ENCODE measurements at regions of chr10 and their contacts with region 1.

Region 1: DNA sequence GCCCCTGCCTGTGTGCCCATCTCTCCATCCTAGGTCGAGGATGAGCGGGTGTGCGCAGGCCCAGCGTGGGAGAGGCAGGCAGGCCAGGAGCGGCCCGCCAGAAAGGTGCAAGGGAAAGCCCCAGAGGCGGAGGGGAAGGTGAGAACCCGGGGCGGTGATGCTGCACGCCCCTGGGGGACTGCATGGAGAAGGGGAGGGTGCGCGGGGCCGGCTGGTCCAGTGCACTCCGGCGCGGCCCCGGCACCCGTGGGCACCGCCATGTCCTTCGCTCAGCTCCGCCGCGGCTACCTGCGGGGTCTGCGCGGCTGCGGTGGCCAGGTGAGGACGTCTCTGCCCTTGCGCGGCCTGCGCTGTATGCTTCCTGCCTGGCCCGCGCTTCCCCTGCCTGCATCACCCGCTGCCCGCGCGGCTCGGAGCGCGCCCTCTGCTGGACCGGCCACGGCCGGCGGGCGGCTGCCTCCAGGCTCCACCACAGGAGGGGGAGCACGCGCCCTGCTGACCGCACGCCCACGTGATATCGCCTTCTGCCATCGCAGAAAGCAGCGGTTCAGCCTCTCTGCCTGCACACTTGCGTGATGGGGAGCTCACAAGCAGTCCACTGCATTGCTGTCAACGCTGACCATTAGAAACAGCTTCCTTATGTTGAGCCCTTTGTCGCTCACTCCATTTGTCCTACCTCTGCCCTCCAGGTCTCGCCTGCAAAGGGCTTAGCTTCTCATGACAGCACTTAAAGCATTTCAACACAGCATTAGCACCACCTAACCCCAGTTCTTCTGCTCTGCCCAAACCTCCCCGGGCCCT is 73.9 kb downstream of the CXCL12 start:
- DNase-seq: peak; percentile 93
- H3K4me3 ChIP-seq: no peak overlapping the region; a peak in 2 of 4 replicates
- H3K27ac ChIP-seq: no peak overlapping the region
- H3K4me1 ChIP-seq: peaks cover 0 to 30% of the 10 kb centered on the region in 2 experiments; a peak in 1 of 4 replicates
- H3K27me3 ChIP-seq: no peaks in the 10 kb centered on the region
- CTCF ChIP-seq: peak; percentile 62
- EP300 ChIP-seq: no peak
- RAD21 ChIP-seq: peak; percentile 74

Region 2: GRCh38 chr10:44046605-44047004 is 264.4 kb before region 1 on chr10:
- CTCF ChIA-PET with region 1: interaction called, 10 read pairs
- POLR2A ChIA-PET with region 1: no interaction called
- DNase-seq: no peak
- H3K4me3 ChIP-seq: no peak overlapping the region
- H3K27ac ChIP-seq: no peak overlapping the region
- H3K4me1 ChIP-seq: peaks cover 0 to 31% of the 10 kb centered on the region in 2 experiments; a peak in 2 of 4 replicates
- H3K27me3 ChIP-seq: no peaks in the 10 kb centered on the region
- CTCF ChIP-seq: no peak
- EP300 ChIP-seq: no peak
- RAD21 ChIP-seq: no peak

Region 3: DNA sequence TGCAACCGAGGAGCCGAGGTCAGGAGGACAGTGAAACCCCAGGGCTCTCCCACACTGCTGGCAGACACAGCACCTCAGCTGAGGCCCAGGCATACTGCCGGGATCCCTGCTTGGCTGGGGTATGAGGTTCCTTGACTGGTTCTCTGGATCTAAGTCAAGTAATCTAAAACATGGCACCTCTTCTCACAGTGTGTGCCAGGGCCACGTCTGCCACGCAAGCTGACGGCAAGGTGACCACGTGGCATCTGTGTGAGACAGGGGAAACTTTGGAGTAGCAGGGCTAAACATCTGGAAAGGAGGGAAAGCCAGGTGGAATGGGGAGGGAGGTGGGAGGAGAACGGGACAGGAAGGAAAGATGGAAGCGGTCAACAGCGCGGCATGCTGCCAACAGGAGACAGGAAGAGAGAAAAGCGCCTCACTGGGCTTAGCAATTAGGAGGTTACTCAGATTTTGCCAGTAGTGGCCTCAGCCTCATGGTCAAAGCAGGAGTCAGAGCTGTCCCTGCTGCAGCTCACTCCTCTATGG is 29.8 kb before region 1 on chr10:
- CTCF ChIA-PET with region 1: interaction called, 16 read pairs
- POLR2A ChIA-PET with region 1: no interaction called
- DNase-seq: no peak
- H3K4me3 ChIP-seq: no peak overlapping the region
- H3K27ac ChIP-seq: peak overlapping the region in 1 of 2 experiments; percentile 20; a peak in 1 of 4 replicates
- H3K4me1 ChIP-seq: peaks cover 0 to 39% of the 10 kb centered on the region in 2 experiments; a peak in 2 of 4 replicates
- H3K27me3 ChIP-seq: no peaks in the 10 kb centered on the region
- CTCF ChIP-seq: no peak
- EP300 ChIP-seq: no peak
- RAD21 ChIP-seq: no peak

Region 4: GRCh38 chr10:44293842-44294241 is 17.1 kb before region 1 on chr10:
- CTCF ChIA-PET with region 1: interaction called, 13 read pairs
- POLR2A ChIA-PET with region 1: no interaction called
- DNase-seq: no peak
- H3K4me3 ChIP-seq: no peak overlapping the region
- H3K27ac ChIP-seq: no peak overlapping the region
- H3K4me1 ChIP-seq: peaks cover 0 to 2% of the 10 kb centered on the region in 2 experiments; a peak in 1 of 4 replicates
- H3K27me3 ChIP-seq: no peaks in the 10 kb centered on the region
- CTCF ChIP-seq: no peak
- EP300 ChIP-seq: no peak
- RAD21 ChIP-seq: no peak

Region 5: DNA sequence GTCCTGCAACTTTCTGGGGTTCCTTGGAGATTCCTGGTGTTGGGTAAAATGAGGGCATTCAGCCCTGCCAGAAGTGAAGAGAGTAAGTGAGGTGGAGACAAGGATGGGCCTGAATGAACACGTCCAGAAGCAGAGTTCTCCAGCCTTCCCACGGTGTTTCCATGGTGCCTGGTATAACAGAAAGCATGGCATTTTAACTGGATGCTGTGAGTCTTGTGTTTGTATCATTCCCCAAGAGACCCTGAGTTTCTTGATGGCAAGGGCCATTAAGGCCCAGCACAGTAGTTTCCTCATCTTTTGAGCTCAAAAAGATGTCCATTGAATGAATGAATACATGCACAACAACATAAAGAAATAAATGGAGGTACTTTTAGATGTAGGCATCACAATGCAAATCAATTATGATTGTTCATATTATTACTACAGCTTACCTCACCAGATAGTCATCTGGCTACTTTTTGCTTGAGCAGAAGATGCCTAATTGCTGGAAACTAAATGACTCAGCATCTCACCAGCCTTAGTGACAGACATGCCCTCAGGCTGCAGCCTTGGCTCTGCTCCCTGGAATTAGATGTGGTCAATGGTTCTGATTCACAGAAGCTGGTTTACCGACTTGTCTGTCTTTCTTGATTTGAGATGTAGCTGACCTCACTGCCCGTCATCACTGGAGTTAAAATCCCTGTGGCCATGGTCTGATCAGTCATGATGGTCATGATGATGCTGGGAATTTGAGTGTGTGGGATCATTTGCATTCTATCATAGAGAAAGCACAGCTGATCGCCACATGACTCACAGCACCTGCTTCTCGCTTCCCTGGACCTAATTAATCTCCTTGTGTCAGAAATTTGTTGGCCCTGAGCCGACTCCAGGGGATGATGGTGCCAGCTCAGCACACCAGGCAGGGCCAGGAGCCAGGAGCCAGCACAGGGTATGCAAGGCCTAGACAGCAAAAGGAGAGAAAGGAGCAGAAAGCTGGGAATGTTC is 10.0 kb before region 1 on chr10:
- CTCF ChIA-PET with region 1: interaction called, 23 read pairs
- POLR2A ChIA-PET with region 1: no interaction called
- DNase-seq: peak; percentile 55
- H3K4me3 ChIP-seq: no peak overlapping the region
- H3K27ac ChIP-seq: peak overlapping the region; percentile 73 to 74
- H3K4me1 ChIP-seq: peaks cover 0 to 26% of the 10 kb centered on the region in 2 experiments; a peak in 2 of 4 replicates
- H3K27me3 ChIP-seq: no peaks in the 10 kb centered on the region
- CTCF ChIP-seq: no peak
- EP300 ChIP-seq: 0 out of 4 replicates have a peak, but pooled peaks of 1 of the 2 experiments have one; percentile 27
- RAD21 ChIP-seq: no peak

Region 6: GRCh38 chr10:44398747-44399658 is 88.0 kb after region 1 on chr10:
- CTCF ChIA-PET with region 1: no interaction called
- POLR2A ChIA-PET with region 1: no interaction called
- DNase-seq: no peak
- H3K4me3 ChIP-seq: no peak overlapping the region
- H3K27ac ChIP-seq: no peak overlapping the region
- H3K4me1 ChIP-seq: peaks cover 0 to 7% of the 10 kb centered on the region in 2 experiments; a peak in 1 of 4 replicates
- H3K27me3 ChIP-seq: peaks cover 13% of the 10 kb centered on the region; the same call in 1 of the 2 replicates
- CTCF ChIP-seq: no peak
- EP300 ChIP-seq: no peak
- RAD21 ChIP-seq: no peak

Region 7: GRCh38 chr10:44974628-44975431 is 663.9 kb after region 1 on chr10:
- CTCF ChIA-PET with region 1: no interaction called
- POLR2A ChIA-PET with region 1: no interaction called
- DNase-seq: peak; percentile 94
- H3K4me3 ChIP-seq: peak overlapping the region; percentile 29 to 45
- H3K27ac ChIP-seq: peak overlapping the region; percentile 24 to 44; a peak in 1 of 4 replicates
- H3K4me1 ChIP-seq: peaks cover 35 to 45% of the 10 kb centered on the region in 2 experiments; a peak in 3 of 4 replicates
- H3K27me3 ChIP-seq: no peaks in the 10 kb centered on the region
- CTCF ChIP-seq: peak; percentile 94
- EP300 ChIP-seq: no peak
- RAD21 ChIP-seq: peak; percentile 67

Measured in SK-N-SH (cell line).